K562 (cell line): ENCODE measurements at regions of chr9 and their contacts with region 1.

Region 1: GRCh38 chr9:123349691-123350480 is 6.1 kb upstream of the CRB2 start:
- DNase-seq: peak; percentile 85 to 89 (median 87)
- ATAC-seq: peak; percentile 86
- H3K4me3 ChIP-seq: peak overlapping the region; percentile 21; the same call in 1 of the 2 replicates
- H3K27ac ChIP-seq: no peak overlapping the region; the same call in 2 of the 3 replicates
- H3K4me1 ChIP-seq: peaks cover 10 to 32% of the 10 kb centered on the region in 2 experiments; a peak in 3 of 5 replicates
- H3K27me3 ChIP-seq: peaks cover 2 to 15% of the 10 kb centered on the region in 2 experiments; a peak in 3 of 5 replicates
- CTCF ChIP-seq: peak; percentile 93 to 96 (median 96)
- EP300 ChIP-seq: no peak
- POLR2A ChIP-seq: no peak
- RAD21 ChIP-seq: peak; percentile 98 to 99

Region 2: DNA sequence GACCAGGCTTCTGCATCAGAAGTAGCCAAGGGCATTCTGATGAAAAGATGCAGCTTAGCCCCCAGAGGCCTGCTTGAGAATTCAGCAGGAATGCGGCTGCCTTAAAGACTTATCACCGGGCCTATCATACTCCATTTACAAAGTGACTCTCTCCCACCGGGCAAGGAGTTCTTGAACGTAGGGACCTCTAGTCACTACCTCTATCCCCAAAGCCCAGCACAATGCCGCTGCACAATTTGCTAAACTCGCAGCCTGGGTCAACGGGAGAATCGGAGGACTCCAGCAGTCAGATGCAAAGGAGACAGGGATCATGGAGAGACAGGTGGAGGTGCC is 522.2 kb before region 1 on chr9:
- CTCF ChIA-PET with region 1: interaction called, 3 read pairs
- POLR2A ChIA-PET with region 1: interaction called, 3 read pairs
- in situ Hi-C with region 1: loop called (anchors 10 kb)
- intact Hi-C with region 1: no loop called
- DNase-seq: peak in 2 of 4 experiments; percentile 17 to 37
- ATAC-seq: peak; percentile 52
- H3K4me3 ChIP-seq: peak overlapping the region; percentile 85
- H3K27ac ChIP-seq: peak overlapping the region; percentile 91
- H3K4me1 ChIP-seq: peaks cover 10 to 13% of the 10 kb centered on the region in 2 experiments; a peak in 4 of 5 replicates
- H3K27me3 ChIP-seq: no peaks in the 10 kb centered on the region
- CTCF ChIP-seq: no peak
- EP300 ChIP-seq: no peak
- POLR2A ChIP-seq: no peak
- RAD21 ChIP-seq: no peak

Region 3: GRCh38 chr9:123081824-123082223 is 268.1 kb before region 1 on chr9:
- CTCF ChIA-PET with region 1: interaction called, 55 read pairs
- POLR2A ChIA-PET with region 1: interaction called, 3 read pairs
- in situ Hi-C with region 1: loop called (anchors 5 kb)
- intact Hi-C with region 1: loop called (anchors 1 kb)
- DNase-seq: peak; percentile 32 to 56 (median 40)
- ATAC-seq: peak; percentile 85
- H3K4me3 ChIP-seq: no peak overlapping the region
- H3K27ac ChIP-seq: no peak overlapping the region
- H3K4me1 ChIP-seq: no peaks in the 10 kb centered on the region
- H3K27me3 ChIP-seq: no peaks in the 10 kb centered on the region
- CTCF ChIP-seq: peak; percentile 55 to 84 (median 67); a peak in 5 of 6 replicates
- EP300 ChIP-seq: no peak
- POLR2A ChIP-seq: no peak
- RAD21 ChIP-seq: peak; percentile 57 to 76

Region 4: DNA sequence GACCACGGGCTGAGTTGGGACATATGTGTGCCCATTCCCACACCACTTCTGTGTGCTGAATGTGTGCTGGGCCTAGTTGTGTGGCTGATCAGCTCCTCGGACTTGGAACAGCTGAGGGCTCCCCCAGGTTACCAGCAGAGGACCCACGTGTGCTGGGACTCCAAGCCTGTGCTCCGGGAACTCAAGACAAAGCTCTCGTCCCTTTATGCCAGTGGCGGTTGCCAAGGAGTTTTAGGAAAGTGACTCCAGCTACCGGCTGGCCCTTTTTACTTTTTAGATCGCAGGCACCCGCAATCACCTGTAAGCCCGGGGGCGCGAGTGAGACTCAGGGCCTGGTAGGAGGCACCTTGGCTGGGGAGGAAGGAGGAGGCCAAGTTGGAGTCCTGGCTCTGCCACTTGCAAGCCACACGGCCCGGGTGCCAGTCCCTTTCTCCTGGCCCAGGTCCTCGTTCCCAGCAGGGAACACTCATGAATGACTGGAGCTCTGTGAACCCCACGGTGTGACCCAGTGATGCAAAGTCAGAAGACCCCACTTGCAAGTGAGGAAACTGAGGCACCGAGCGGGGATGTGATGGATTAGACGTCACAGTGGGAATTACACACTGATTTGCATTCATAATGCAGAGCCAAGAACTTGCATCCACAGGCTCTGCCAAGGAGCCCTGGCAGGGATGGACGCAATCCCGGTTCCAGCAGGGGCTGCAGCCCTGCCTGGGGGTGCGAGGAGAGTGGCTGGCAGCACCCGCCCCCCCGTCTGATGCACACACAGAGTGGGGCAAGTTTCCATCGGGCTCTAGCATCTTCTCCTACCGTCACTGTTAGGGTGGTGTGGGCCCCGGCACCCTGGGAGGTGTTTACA is 33.0 kb after region 1 on chr9:
- CTCF ChIA-PET with region 1: interaction called, 75 read pairs
- POLR2A ChIA-PET with region 1: interaction called, 3 read pairs
- in situ Hi-C with region 1: loop called (anchors 5 kb)
- intact Hi-C with region 1: loop called (anchors 1 kb)
- DNase-seq: no peak
- ATAC-seq: no peak
- H3K4me3 ChIP-seq: no peak overlapping the region
- H3K27ac ChIP-seq: no peak overlapping the region
- H3K4me1 ChIP-seq: peaks cover 0 to 42% of the 10 kb centered on the region in 2 experiments; a peak in 1 of 5 replicates
- H3K27me3 ChIP-seq: no peaks in the 10 kb centered on the region
- CTCF ChIP-seq: no peak
- EP300 ChIP-seq: no peak
- POLR2A ChIP-seq: no peak
- RAD21 ChIP-seq: no peak